Activated naive CD4-positive, alpha-beta T cell treated with anti-CD3 and anti-CD28 coated beads for 36 hours (primary cell): ENCODE measurements at regions of chr7 and their contacts with region 1.

Region 1: GRCh38 chr7:130242198-130243014 is 24.3 kb upstream of the CPA2 start:
- DNase-seq: peak; percentile 76
- H3K4me3 Mint-ChIP-seq: no peak overlapping the region
- H3K27ac Mint-ChIP-seq: no peak overlapping the region
- H3K4me1 Mint-ChIP-seq: peaks cover 9% of the 10 kb centered on the region
- H3K27me3 Mint-ChIP-seq: no peaks in the 10 kb centered on the region

Region 2: GRCh38 chr7:130201796-130202195 is 40.6 kb before region 1 on chr7:
- CTCF ChIA-PET with region 1: no interaction called
- intact Hi-C with region 1: no loop called
- DNase-seq: no peak
- H3K4me3 Mint-ChIP-seq: no peak overlapping the region
- H3K27ac Mint-ChIP-seq: no peak overlapping the region
- H3K4me1 Mint-ChIP-seq: peaks cover 33% of the 10 kb centered on the region
- H3K27me3 Mint-ChIP-seq: no peaks in the 10 kb centered on the region

Region 3: GRCh38 chr7:130305433-130306042 is 63.1 kb after region 1 on chr7:
- CTCF ChIA-PET with region 1: no interaction called
- intact Hi-C with region 1: loop called (anchors 5 kb)
- DNase-seq: no peak
- H3K4me3 Mint-ChIP-seq: no peak overlapping the region
- H3K27ac Mint-ChIP-seq: no peak overlapping the region
- H3K4me1 Mint-ChIP-seq: no peaks in the 10 kb centered on the region
- H3K27me3 Mint-ChIP-seq: no peaks in the 10 kb centered on the region

Region 4: DNA sequence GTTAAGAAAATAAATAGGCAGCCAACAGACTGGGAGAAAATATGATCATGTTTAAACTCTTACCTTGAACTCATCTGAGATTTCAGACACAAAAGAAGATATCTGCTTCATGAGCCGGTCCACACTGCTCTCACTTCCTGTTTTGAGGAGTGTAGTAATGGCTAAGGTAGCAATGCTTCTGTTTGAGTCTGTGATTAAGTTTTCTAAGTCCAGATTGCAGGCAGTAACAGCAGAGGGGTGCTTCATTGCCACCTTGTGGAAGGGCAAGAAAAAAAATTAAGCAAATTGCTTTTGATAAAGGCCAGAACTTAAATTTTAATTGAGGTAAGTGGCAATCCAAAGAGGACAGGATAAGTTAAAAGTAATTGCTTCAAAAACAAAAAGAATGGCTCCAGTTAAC is 318.6 kb after region 1 on chr7:
- CTCF ChIA-PET with region 1: interaction called, 4 read pairs
- intact Hi-C with region 1: loop called (anchors 1 kb)
- DNase-seq: peak; percentile 25
- H3K4me3 Mint-ChIP-seq: no peak overlapping the region
- H3K27ac Mint-ChIP-seq: no peak overlapping the region
- H3K4me1 Mint-ChIP-seq: no peaks in the 10 kb centered on the region
- H3K27me3 Mint-ChIP-seq: no peaks in the 10 kb centered on the region

Region 5: GRCh38 chr7:130695840-130696239 is 453.4 kb after region 1 on chr7:
- CTCF ChIA-PET with region 1: no interaction called
- intact Hi-C with region 1: loop called (anchors 2 kb)
- DNase-seq: no peak
- H3K4me3 Mint-ChIP-seq: no peak overlapping the region
- H3K27ac Mint-ChIP-seq: no peak overlapping the region
- H3K4me1 Mint-ChIP-seq: no peaks in the 10 kb centered on the region
- H3K27me3 Mint-ChIP-seq: no peaks in the 10 kb centered on the region

Region 6: DNA sequence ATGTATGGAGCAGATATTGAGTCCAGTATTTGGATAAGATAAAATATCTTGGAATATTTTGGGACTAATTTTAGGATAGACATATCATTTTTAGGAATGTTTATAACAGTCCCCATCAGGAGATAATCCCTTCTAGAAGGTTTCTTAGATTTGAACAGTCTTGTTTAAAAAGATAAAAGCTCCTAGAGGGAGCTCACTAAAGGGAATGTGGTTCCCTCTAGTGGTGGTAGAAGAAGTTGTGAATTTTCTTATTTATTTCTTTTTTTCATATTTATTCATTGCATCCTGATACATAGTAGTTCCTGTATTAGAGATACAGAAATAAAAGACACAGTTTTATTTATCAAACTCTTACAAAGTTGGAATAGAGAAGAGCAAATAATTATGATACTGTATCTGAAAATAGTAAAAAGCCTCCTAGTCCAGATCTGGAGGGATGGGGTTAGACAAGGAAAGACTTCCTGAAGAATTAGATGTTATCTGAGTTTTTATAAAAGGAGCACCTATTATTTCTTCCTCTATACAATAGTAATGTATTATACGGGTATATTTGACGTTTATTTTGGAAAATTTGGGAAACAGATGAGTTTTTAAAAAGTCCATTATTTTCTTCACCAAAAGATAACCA is 516.1 kb after region 1 on chr7:
- CTCF ChIA-PET with region 1: interaction called, 20 read pairs
- intact Hi-C with region 1: loop called (anchors 1 kb)
- DNase-seq: no peak
- H3K4me3 Mint-ChIP-seq: no peak overlapping the region
- H3K27ac Mint-ChIP-seq: no peak overlapping the region
- H3K4me1 Mint-ChIP-seq: no peaks in the 10 kb centered on the region
- H3K27me3 Mint-ChIP-seq: peaks cover 3% of the 10 kb centered on the region

Region 7: GRCh38 chr7:130831817-130832481 is 589.5 kb after region 1 on chr7:
- CTCF ChIA-PET with region 1: interaction called, 5 read pairs
- intact Hi-C with region 1: loop called (anchors 1 kb)
- DNase-seq: no peak
- H3K4me3 Mint-ChIP-seq: no peak overlapping the region
- H3K27ac Mint-ChIP-seq: no peak overlapping the region
- H3K4me1 Mint-ChIP-seq: no peaks in the 10 kb centered on the region
- H3K27me3 Mint-ChIP-seq: peaks cover 8% of the 10 kb centered on the region